WTC11 (cell line): ENCODE measurements at regions of chr22 and their contacts with region 1.

Region 1: DNA sequence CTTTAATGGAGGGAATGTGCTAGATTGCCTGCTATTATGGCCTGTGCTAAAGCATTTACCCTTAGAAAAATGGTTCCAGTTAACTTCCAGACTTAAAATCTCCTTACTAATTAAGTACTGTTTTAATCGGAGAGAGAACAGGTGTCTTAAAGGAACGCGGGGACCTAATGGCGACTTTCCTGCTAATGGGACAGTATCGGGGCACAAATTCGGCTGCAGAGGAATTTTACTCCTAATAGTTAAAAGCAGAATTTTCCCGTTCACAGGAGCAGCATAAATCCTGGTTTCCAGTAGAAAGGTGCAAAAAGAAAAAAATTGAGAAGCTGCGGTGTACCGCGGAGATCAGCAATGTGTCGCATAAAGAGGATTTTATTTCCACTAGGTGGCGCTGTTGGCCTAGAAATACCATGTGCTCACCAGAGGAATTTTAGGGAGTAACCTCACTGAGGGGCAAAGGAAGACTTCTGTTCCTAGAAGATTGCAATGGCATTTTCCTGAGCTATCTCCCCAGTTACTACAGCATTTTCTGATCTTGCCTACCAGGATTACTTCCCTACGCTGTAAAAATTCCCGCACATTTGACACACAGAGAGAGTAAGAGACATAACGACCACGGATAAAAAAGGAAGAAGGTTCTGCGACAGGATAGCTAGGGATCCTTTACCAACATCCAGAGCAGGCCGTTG is 44.5 kb downstream of the ZNF280B start:
- DNase-seq: peak; percentile 66
- ATAC-seq: peak; percentile 79
- H3K4me3 Mint-ChIP-seq: no peak overlapping the region
- H3K27ac Mint-ChIP-seq: no peak overlapping the region
- H3K4me1 Mint-ChIP-seq: peaks cover 8% of the 10 kb centered on the region; the same call in 1 of the 2 replicates
- H3K27me3 Mint-ChIP-seq: peaks cover 100% of the 10 kb centered on the region
- CTCF ChIP-seq: peak; percentile 77

Region 2: DNA sequence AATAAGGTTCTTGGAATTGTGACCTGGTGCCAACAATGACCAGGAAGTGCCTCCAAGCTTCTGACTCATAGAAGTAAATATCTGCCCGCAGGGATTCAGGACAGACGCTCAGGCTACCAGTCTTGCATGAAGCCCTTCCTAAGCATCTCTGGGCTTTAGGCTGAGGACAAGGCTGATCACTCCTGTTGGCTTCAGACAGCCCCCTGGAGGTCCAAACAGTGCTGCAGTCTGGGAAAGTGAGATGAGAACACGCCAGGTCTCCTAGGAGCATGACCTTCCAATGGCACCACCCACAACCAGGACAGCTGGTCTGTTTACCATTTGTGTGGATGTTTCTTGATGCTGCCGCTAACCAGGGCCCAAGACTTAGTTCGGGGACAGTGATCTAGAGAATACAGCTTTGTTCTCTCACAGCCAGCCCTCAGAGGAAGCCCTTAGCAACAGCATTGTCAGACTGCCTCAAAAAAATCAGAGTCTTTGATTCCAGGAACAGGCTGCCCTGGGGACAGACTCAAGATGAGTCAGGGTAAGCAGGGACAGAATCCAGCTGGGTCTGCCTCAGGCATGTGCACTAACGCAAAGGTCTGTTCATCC is 66.6 kb before region 1 on chr22:
- CTCF ChIA-PET with region 1: no interaction called
- POLR2A ChIA-PET with region 1: no interaction called
- DNase-seq: no peak
- ATAC-seq: peak; percentile 83
- H3K4me3 Mint-ChIP-seq: no peak overlapping the region
- H3K27ac Mint-ChIP-seq: no peak overlapping the region
- H3K4me1 Mint-ChIP-seq: no peaks in the 10 kb centered on the region
- H3K27me3 Mint-ChIP-seq: peaks cover 100% of the 10 kb centered on the region
- CTCF ChIP-seq: no peak

Region 3: GRCh38 chr22:22422629-22423112 is 41.3 kb before region 1 on chr22:
- CTCF ChIA-PET with region 1: interaction called, 15 read pairs
- POLR2A ChIA-PET with region 1: no interaction called
- DNase-seq: peak; percentile 82
- ATAC-seq: peak; percentile 75
- H3K4me3 Mint-ChIP-seq: no peak overlapping the region
- H3K27ac Mint-ChIP-seq: no peak overlapping the region
- H3K4me1 Mint-ChIP-seq: peaks cover 16% of the 10 kb centered on the region
- H3K27me3 Mint-ChIP-seq: peaks cover 98% of the 10 kb centered on the region
- CTCF ChIP-seq: peak; percentile 52

Region 4: GRCh38 chr22:22474733-22475132 is 10.7 kb after region 1 on chr22:
- CTCF ChIA-PET with region 1: interaction called, 17 read pairs
- POLR2A ChIA-PET with region 1: interaction called, 4 read pairs
- DNase-seq: no peak
- ATAC-seq: peak; percentile 60
- H3K4me3 Mint-ChIP-seq: no peak overlapping the region
- H3K27ac Mint-ChIP-seq: no peak overlapping the region
- H3K4me1 Mint-ChIP-seq: peaks cover 8% of the 10 kb centered on the region
- H3K27me3 Mint-ChIP-seq: peaks cover 72% of the 10 kb centered on the region
- CTCF ChIP-seq: no peak

Region 5: DNA sequence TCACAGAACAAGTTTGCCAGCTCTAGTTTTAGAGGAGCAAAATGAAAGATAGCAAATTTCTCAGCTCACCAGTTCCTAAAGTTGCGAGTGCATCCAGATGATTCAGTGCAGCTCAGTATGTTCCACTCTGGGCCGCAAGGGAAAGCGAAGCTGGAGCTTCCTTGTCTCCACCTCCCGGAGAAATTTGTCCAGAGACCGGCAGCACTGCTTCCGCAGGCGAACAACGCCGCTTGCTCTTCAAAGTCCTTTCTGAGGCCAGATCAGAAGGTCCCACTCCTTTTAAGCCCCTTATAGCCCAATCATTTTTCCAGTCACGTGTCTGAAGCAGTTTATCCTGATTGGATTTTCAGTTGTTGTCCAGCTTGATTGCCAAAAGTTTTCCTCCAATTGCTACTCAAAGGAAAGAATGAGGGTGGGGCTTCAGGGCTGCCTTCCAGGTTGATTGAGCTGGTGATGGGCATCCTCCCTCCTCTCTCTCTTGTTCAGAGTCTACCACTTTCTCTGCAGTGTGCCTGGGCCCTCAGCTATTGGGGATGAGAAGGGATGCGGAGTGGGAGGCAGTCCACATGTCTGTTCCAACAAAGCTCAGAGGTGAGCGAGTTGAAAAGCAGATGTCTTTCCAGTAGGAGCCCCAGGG is 56.1 kb after region 1 on chr22 and contains the start of gene ZNF280A:
- CTCF ChIA-PET with region 1: interaction called, 10 read pairs
- POLR2A ChIA-PET with region 1: no interaction called
- DNase-seq: no peak
- ATAC-seq: peak; percentile 64
- H3K4me3 Mint-ChIP-seq: no peak within 1 kb of the TSS; the same call in 1 of the 2 replicates
- H3K27ac Mint-ChIP-seq: no peak within 1 kb of the TSS
- H3K4me1 Mint-ChIP-seq: peaks cover 14% of the 10 kb centered on the region
- H3K27me3 Mint-ChIP-seq: peaks cover 91% of the 10 kb centered on the region
- CTCF ChIP-seq: no peak
- total RNA-seq, gene ZNF280A: 0.22 to 0.44 TPM (median 0.30 TPM) in 3 replicates

Region 6: DNA sequence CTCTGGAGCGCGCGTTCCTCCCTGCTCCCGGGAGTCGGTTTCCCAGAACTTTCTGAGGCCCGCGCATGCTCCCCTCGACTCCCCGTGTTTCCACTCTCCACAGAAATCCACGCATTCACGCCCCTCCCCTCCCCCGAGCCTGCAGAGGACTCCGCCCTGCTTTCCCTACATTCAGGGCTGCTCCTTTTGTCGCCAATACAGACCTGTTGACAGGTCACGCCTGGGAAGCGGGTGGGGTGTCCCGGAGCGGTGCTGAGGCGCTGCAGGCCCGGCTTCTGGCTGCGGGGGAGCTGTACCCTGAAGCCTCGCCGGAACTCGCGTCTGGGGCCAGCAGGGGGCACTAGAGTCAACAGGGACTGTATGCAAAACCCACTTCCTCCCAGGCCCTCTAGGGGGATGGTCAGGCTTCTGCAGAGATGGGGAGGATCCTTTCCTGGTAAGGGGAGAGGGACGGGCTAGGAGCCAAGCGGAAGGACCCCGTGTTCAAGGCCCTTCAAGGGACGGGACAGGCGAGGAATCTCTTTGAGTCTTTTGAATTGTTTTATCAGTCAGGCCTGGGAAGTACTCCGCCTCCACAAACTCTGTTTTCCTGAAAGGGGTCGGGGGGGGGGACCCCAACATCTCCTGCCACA is 95.1 kb after region 1 on chr22 and contains the start of gene PRAME:
- CTCF ChIA-PET with region 1: interaction called, 15 read pairs
- POLR2A ChIA-PET with region 1: no interaction called
- DNase-seq: peak; percentile 93
- ATAC-seq: peak; percentile 97
- H3K4me3 Mint-ChIP-seq: no peak within 1 kb of the TSS
- H3K27ac Mint-ChIP-seq: no peak within 1 kb of the TSS
- H3K4me1 Mint-ChIP-seq: no peaks in the 10 kb centered on the region
- H3K27me3 Mint-ChIP-seq: peaks cover 79% of the 10 kb centered on the region
- CTCF ChIP-seq: peak; percentile 89
- total RNA-seq, gene PRAME: 1.4 to 1.7 TPM (median 1.5 TPM) in 3 replicates

Region 7: GRCh38 chr22:22591348-22592299 is 127.6 kb after region 1 on chr22:
- CTCF ChIA-PET with region 1: interaction called, 24 read pairs
- POLR2A ChIA-PET with region 1: no interaction called
- DNase-seq: no peak
- ATAC-seq: no peak
- H3K4me3 Mint-ChIP-seq: no peak overlapping the region
- H3K27ac Mint-ChIP-seq: no peak overlapping the region
- H3K4me1 Mint-ChIP-seq: no peaks in the 10 kb centered on the region; the same call in 1 of the 2 replicates
- H3K27me3 Mint-ChIP-seq: peaks cover 93% of the 10 kb centered on the region
- CTCF ChIP-seq: no peak

Region 8: GRCh38 chr22:22702237-22703202 is 238.5 kb after region 1 on chr22:
- CTCF ChIA-PET with region 1: interaction called, 14 read pairs
- POLR2A ChIA-PET with region 1: no interaction called
- DNase-seq: peak; percentile 61
- ATAC-seq: peak; percentile 86
- H3K4me3 Mint-ChIP-seq: no peak overlapping the region
- H3K27ac Mint-ChIP-seq: no peak overlapping the region
- H3K4me1 Mint-ChIP-seq: no peaks in the 10 kb centered on the region
- H3K27me3 Mint-ChIP-seq: peaks cover 99% of the 10 kb centered on the region
- CTCF ChIP-seq: peak; percentile 52; the same call in 1 of the 2 replicates